ENCODE measurements at regions of chr11 and their contacts with region 1.

Region 1: DNA sequence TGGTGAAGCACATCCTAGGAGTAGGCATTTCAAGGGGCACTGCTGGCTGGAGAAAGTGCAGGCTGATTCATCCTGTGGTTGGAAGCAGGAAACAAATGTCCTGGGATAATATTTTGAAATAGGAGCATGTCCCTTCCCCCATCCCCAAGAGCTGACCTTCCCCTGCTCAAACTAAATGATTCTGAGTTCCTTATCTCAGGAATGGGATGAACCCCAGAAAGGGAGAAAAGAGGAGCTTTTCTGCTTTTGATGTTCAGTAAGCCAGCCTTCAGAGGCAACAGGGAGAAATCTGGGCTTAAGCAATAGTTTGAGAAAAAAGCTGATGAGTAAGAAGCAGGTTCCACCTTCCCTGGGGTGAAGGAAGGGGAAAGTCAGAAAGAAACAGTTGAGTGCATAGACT is 19.5 kb upstream of the SPON1 start:
- DNase-seq: no peak
- ATAC-seq: no peak
- H3K4me3 Mint-ChIP-seq: no peak overlapping the region
- H3K27ac Mint-ChIP-seq: peak overlapping the region in 4 of 10 donors; percentile 0 to 60 (median 28)
- H3K4me1 Mint-ChIP-seq: peaks cover 33 to 61% (median 53%) of the 10 kb centered on the region in 4 donors
- H3K27me3 Mint-ChIP-seq: no peaks in the 10 kb centered on the region

Region 2: GRCh38 chr11:13861411-13861810 is 81.6 kb before region 1 on chr11:
- POLR2A ChIA-PET with region 1: interaction called, 15 read pairs
- DNase-seq: peak in 4 of 10 donors; percentile 4 to 24 (median 18)
- ATAC-seq: peak; percentile 47 to 55
- H3K4me3 Mint-ChIP-seq: peak overlapping the region in 7 of 10 donors; percentile 36 to 65 (median 57)
- H3K27ac Mint-ChIP-seq: peak overlapping the region in 9 of 10 donors; percentile 63 to 93 (median 82)
- H3K4me1 Mint-ChIP-seq: peaks cover 14 to 30% (median 23%) of the 10 kb centered on the region in 4 donors
- H3K27me3 Mint-ChIP-seq: peaks cover 0 to 4% (median 0%) of the 10 kb centered on the region in 5 donors

Region 3: GRCh38 chr11:13868710-13869397 is 74.1 kb before region 1 on chr11:
- POLR2A ChIA-PET with region 1: interaction called, 23 read pairs
- DNase-seq: peak in 8 of 10 donors; percentile 45 to 90 (median 72)
- ATAC-seq: peak; percentile 94 to 95
- H3K4me3 Mint-ChIP-seq: peak overlapping the region in 9 of 10 donors; percentile 0 to 62 (median 37)
- H3K27ac Mint-ChIP-seq: peak overlapping the region; percentile 89 to 98 (median 94)
- H3K4me1 Mint-ChIP-seq: peaks cover 19 to 49% (median 35%) of the 10 kb centered on the region in 4 donors
- H3K27me3 Mint-ChIP-seq: no peaks in the 10 kb centered on the region

Region 4: DNA sequence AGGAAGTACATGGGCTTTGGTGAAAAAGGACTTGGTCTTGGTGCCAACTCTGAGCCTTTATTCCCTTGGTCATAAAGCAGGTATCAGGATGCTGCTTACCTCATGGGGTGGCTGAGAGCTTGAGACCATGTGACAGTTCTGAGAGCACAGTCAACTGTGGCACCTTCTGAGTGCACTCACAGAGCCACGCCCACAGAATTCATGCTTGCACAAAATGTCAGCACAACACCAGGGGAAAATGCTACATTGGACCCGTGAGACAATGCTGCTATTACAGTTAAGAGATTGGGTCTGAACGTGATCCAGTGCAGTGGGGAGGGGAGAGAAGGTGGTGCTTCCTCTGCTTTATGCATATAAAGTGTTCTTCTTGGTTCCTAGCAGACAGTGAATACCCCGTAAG is 59.9 kb before region 1 on chr11:
- POLR2A ChIA-PET with region 1: no interaction called
- DNase-seq: no peak
- ATAC-seq: peak in 1 of 2 donors; percentile 51
- H3K4me3 Mint-ChIP-seq: no peak overlapping the region
- H3K27ac Mint-ChIP-seq: peak overlapping the region in 4 of 10 donors; percentile 5 to 68 (median 35)
- H3K4me1 Mint-ChIP-seq: peaks cover 0 to 13% (median 10%) of the 10 kb centered on the region in 4 donors
- H3K27me3 Mint-ChIP-seq: no peaks in the 10 kb centered on the region

Region 5: GRCh38 chr11:13923716-13924650 is 19.0 kb before region 1 on chr11:
- POLR2A ChIA-PET with region 1: interaction called, 66 read pairs
- DNase-seq: peak in 7 of 10 donors; percentile 2 to 67 (median 22)
- ATAC-seq: peak; percentile 96 to 97
- H3K4me3 Mint-ChIP-seq: peak overlapping the region; percentile 69 to 88 (median 86)
- H3K27ac Mint-ChIP-seq: peak overlapping the region; percentile 94 to 100 (median 98)
- H3K4me1 Mint-ChIP-seq: peaks cover 39 to 57% (median 50%) of the 10 kb centered on the region in 4 donors
- H3K27me3 Mint-ChIP-seq: no peaks in the 10 kb centered on the region